K562 (cell line): ENCODE measurements at regions of chr3 and their contacts with region 1.

Region 1: GRCh38 chr3:47871389-47871788 is 68.5 kb downstream of the DHX30 start:
- DNase-seq: peak; percentile 73 to 91 (median 76)
- ATAC-seq: peak; percentile 95
- H3K4me3 ChIP-seq: no peak overlapping the region
- H3K27ac ChIP-seq: peak overlapping the region; percentile 39
- H3K4me1 ChIP-seq: peaks cover 13 to 21% of the 10 kb centered on the region in 2 experiments; a peak in 4 of 5 replicates
- H3K27me3 ChIP-seq: no peaks in the 10 kb centered on the region
- CTCF ChIP-seq: no peak
- EP300 ChIP-seq: peak; percentile 46; the same call in 1 of the 2 replicates
- POLR2A ChIP-seq: no peak
- RAD21 ChIP-seq: peak in 1 of 2 experiments; percentile 9; a peak in 1 of 4 replicates

Region 2: GRCh38 chr3:47882338-47882737 is 10.9 kb after region 1 on chr3:
- CTCF ChIA-PET with region 1: no interaction called
- POLR2A ChIA-PET with region 1: interaction called, 10 read pairs
- in situ Hi-C with region 1: no loop called
- intact Hi-C with region 1: no loop called
- DNase-seq: no peak
- ATAC-seq: peak; percentile 45; the same call in 1 of the 3 replicates
- H3K4me3 ChIP-seq: no peak overlapping the region
- H3K27ac ChIP-seq: no peak overlapping the region
- H3K4me1 ChIP-seq: no peaks in the 10 kb centered on the region; a peak in 2 of 5 replicates
- H3K27me3 ChIP-seq: no peaks in the 10 kb centered on the region
- CTCF ChIP-seq: no peak
- EP300 ChIP-seq: no peak
- POLR2A ChIP-seq: no peak
- RAD21 ChIP-seq: no peak